ENCODE measurements at regions of chr5 and their contacts with region 1.

Region 1: GRCh38 chr5:40679155-40679913 is 381 bp upstream of the PTGER4 start:
- DNase-seq: peak; percentile 79 to 95 (median 88)
- ATAC-seq: peak; percentile 67
- H3K4me3 ChIP-seq: peak overlapping the region; percentile 91
- H3K4me3 Mint-ChIP-seq: peak overlapping the region; percentile 99
- H3K27ac ChIP-seq: peak overlapping the region; percentile 82 to 93
- H3K27ac Mint-ChIP-seq: peak overlapping the region; percentile 84
- H3K4me1 ChIP-seq: peaks cover 38% of the 10 kb centered on the region
- H3K4me1 Mint-ChIP-seq: peaks cover 59% of the 10 kb centered on the region
- H3K27me3 ChIP-seq: no peaks in the 10 kb centered on the region
- H3K27me3 Mint-ChIP-seq: no peaks in the 10 kb centered on the region
- CTCF ChIP-seq: no peak

Region 2: GRCh38 chr5:40486437-40487275 is 192.7 kb before region 1 on chr5:
- CTCF ChIA-PET with region 1: interaction called, 3 read pairs
- POLR2A ChIA-PET with region 1: no interaction called
- intact Hi-C with region 1: loop called in 1 of 2 experiments (anchors 5 kb)
- DNase-seq: peak in 11 of 14 experiments; percentile 1 to 88 (median 19)
- ATAC-seq: peak; percentile 85
- H3K4me3 ChIP-seq: no peak overlapping the region
- H3K4me3 Mint-ChIP-seq: peak overlapping the region; percentile 26
- H3K27ac ChIP-seq: peak overlapping the region in 1 of 2 donors; percentile 8
- H3K27ac Mint-ChIP-seq: peak overlapping the region; percentile 64
- H3K4me1 ChIP-seq: peaks cover 5% of the 10 kb centered on the region
- H3K4me1 Mint-ChIP-seq: peaks cover 42% of the 10 kb centered on the region
- H3K27me3 ChIP-seq: no peaks in the 10 kb centered on the region
- H3K27me3 Mint-ChIP-seq: no peaks in the 10 kb centered on the region
- CTCF ChIP-seq: no peak

Region 3: DNA sequence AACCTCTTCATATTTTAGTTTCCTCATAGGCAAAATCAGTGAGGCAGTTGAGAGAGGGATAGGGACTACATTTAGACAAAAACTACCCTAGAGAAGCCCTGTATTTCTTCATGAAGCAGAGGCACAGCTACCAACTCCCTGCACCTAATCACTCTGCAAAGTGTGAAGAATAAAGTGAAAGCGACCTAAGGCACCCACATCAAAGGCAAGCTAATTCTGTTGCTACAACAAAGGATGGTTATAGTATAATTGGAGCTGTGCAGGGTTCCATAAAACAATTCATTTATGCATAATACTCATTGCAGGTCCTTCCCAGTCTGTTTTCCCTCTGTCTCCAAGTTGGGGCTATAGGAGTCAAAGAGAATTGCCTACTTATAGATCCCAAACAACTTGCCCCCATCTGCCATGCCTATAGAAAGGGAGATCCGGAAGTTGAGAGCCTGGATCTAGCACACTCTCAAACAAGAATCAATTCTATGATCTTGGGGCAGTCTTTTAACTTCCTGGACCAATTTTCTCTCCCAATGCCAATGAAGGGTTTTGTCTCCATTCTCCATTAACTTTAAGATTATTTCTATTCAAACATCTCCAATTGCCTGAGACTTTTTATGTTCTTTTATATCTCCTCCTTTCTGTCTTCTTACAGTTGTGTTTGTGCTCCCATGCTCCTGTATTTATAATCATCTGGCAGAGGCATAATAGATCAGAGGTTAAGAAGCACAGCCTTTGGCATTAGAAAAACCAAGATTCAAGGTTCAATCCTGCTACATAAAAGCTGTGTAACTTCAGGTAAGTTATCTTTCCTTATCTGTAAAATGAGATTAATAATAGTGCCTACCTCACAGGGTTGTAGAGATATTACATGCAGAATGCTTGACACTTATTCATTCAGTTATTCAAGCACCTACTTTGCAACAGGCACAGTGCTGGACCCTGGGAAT is 55.6 kb before region 1 on chr5:
- CTCF ChIA-PET with region 1: no interaction called
- POLR2A ChIA-PET with region 1: interaction called, 11 read pairs
- intact Hi-C with region 1: loop called (anchors 5 kb)
- DNase-seq: peak in 9 of 14 experiments; percentile 3 to 74 (median 29)
- ATAC-seq: peak; percentile 88
- H3K4me3 ChIP-seq: no peak overlapping the region
- H3K4me3 Mint-ChIP-seq: peak overlapping the region; percentile 22
- H3K27ac ChIP-seq: peak overlapping the region in 1 of 2 donors; percentile 17
- H3K27ac Mint-ChIP-seq: peak overlapping the region; percentile 74
- H3K4me1 ChIP-seq: peaks cover 17% of the 10 kb centered on the region
- H3K4me1 Mint-ChIP-seq: peaks cover 54% of the 10 kb centered on the region
- H3K27me3 ChIP-seq: no peaks in the 10 kb centered on the region
- H3K27me3 Mint-ChIP-seq: no peaks in the 10 kb centered on the region
- CTCF ChIP-seq: no peak

Region 4: DNA sequence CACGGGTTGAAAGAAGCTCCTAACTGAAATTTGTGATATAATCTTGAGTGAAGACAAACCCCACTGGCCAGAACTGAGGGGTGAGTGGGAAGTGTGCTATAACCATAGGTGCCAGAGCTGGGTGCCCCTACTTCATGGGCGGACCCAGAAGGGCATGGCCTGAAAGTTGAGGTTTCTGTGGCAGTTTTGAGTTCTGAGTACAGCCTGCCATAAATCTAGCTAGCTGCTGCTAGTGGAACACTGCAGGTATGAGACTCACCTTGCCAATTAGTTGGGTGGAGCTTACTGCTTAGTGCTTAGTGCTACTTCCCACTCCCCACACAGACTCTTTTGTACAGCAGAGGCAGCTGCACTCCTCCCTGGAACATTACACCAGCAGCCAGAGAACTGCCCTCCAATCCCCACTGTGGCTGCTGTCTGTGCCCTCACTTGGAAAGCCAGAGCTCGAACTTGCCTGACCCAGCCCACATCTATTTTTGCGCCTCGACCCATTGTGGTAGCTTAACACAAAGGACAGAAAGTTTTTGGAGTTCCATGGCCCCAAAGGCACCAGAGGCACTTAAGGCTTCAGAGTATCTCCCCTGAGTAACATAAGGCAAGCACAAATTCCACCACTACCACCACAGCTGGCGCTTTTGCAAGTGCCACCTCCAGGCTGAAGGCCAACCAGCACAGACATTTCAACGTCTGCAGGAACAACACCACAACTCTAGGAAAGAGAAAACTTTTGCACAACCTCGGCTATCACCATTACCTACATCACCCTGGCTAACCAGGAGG is 26.7 kb before region 1 on chr5:
- CTCF ChIA-PET with region 1: no interaction called
- POLR2A ChIA-PET with region 1: interaction called, 103 read pairs
- intact Hi-C with region 1: loop called in 1 of 2 experiments (anchors 2 kb)
- DNase-seq: peak in 4 of 14 experiments; percentile 8 to 60 (median 42)
- ATAC-seq: peak; percentile 27
- H3K4me3 ChIP-seq: no peak overlapping the region
- H3K4me3 Mint-ChIP-seq: peak overlapping the region; percentile 84
- H3K27ac ChIP-seq: peak overlapping the region; percentile 33 to 50
- H3K27ac Mint-ChIP-seq: peak overlapping the region; percentile 82
- H3K4me1 ChIP-seq: peaks cover 37% of the 10 kb centered on the region
- H3K4me1 Mint-ChIP-seq: peaks cover 83% of the 10 kb centered on the region
- H3K27me3 ChIP-seq: no peaks in the 10 kb centered on the region
- H3K27me3 Mint-ChIP-seq: no peaks in the 10 kb centered on the region
- CTCF ChIP-seq: no peak

Region 5: GRCh38 chr5:40755407-40756365 is 76.4 kb after region 1 on chr5 and contains the start of gene TTC33:
- CTCF ChIA-PET with region 1: no interaction called
- POLR2A ChIA-PET with region 1: interaction called, 5 read pairs
- intact Hi-C with region 1: loop called in 1 of 2 experiments (anchors 5 kb)
- DNase-seq: peak; percentile 86 to 96 (median 92)
- ATAC-seq: peak; percentile 80
- H3K4me3 ChIP-seq: peak within 1 kb of the TSS; percentile 89
- H3K4me3 Mint-ChIP-seq: no peak within 1 kb of the TSS
- H3K27ac ChIP-seq: peak within 1 kb of the TSS; percentile 87 to 89
- H3K27ac Mint-ChIP-seq: no peak within 1 kb of the TSS
- H3K4me1 ChIP-seq: peaks cover 14% of the 10 kb centered on the region
- H3K4me1 Mint-ChIP-seq: peaks cover 25% of the 10 kb centered on the region
- H3K27me3 ChIP-seq: no peaks in the 10 kb centered on the region
- H3K27me3 Mint-ChIP-seq: no peaks in the 10 kb centered on the region
- CTCF ChIP-seq: peak; percentile 51
- total RNA-seq, gene TTC33: 8.7 to 12.0 TPM